Head of caudate nucleus (tissue), 42 donors: ENCODE measurements at regions of chr6 and their contacts with region 1.

Region 1: DNA sequence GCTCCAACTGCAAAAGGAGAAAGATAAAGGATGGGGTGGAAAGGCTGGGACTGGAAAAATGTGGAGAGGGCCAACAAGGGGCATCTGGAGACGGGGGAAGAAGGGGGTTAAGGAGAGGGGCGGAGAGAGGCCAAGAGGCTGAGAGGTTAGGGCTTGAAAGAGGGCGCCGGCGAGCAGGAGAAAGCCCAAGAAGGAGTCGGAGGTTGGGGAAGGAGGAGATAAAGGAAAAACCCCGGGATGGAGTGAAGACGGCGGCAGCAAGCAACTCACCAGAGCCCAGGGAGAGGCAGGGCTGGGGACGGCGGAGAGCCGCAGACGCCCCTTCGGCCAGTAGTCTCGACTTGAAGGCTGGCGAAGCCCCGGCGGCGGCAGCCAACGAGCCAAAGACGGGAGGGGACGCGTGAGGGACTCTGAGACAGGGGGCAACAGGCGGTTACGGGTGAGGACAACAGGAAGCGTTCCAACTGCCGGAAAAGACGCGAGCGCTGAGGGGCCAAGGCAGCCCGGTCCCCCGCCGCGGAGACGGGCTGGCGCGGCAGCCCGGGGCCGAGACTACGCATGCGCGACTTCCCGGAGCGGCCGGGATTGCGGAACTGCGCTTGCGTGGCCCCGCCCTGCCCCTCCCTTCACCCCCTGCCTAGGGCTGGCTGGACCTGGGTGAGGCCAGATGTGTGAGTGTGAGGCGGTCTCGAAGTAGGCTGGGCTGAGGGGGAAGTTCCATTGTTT is at the start of gene STK38:
- DNase-seq: peak; percentile 68 to 96 (median 90)

Region 2: GRCh38 chr6:36594029-36594815 is 47.1 kb after region 1 on chr6 and contains the start of gene SRSF3:
- intact Hi-C with region 1: loop called (anchors 2 kb)
- DNase-seq: peak; percentile 92 to 99 (median 98)

Region 3: DNA sequence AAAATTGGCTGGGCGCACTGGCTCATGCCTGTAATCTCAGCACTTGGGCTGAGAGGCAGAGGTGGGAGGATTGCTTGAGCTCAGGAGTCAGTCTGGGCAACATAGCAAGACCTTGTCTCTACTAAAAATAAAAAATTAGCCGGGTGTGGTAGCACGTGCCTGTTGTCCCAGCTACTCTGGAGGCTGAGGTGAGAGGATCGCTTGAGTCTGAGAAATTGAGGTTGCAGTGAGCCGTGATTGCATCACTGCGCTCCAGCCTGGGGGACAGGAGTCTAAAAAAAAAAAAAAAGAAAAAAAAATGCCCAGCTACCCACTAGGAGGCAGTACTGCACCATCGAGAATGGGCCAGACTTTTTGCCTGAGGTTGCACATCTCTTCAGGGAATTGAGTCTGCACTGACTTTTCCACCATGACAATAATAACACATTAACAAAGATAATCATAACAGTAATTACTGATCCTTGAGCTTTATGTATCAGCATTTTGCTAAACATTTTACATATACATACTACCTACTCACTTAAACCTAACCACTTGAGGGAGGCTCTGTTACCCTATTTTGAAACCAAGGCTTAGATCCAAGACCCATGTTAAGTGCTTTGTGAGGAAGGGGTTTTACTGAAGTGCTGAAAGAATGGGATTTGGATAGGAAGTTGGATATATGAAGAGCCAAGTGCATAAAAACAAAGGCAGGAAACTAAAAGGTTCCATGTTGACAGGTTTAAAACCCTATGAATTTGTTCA is 68.1 kb after region 1 on chr6:
- intact Hi-C with region 1: no loop called
- DNase-seq: peak in 20 of 42 donors; percentile 10 to 68 (median 42)

Region 4: DNA sequence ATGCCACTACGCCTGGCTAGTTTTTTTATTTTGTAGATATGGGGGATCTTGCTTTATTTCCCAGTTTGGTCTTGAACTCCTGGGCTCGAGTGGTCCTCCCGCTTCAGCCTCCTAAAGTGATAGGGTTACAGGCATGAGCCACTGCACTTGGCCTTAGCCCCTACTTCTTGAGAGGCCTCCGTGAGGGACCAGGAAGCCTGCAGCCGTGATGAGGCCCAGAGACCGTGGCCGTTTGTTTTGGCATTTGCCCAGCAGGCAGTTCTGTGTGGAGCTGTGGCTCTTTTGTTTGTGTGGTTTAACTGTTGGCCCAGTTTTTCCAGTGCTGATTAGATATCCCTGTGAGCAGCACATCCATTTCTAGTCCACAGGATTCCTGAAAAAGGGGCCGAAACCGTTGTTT is 86.8 kb after region 1 on chr6:
- intact Hi-C with region 1: no loop called
- DNase-seq: peak in 2 of 42 donors; percentile 19 to 50